Activated naive CD4-positive, alpha-beta T cell treated with anti-CD3 and anti-CD28 coated beads for 36 hours (primary cell): ENCODE measurements at regions of chr5 and their contacts with region 1.

Region 1: DNA sequence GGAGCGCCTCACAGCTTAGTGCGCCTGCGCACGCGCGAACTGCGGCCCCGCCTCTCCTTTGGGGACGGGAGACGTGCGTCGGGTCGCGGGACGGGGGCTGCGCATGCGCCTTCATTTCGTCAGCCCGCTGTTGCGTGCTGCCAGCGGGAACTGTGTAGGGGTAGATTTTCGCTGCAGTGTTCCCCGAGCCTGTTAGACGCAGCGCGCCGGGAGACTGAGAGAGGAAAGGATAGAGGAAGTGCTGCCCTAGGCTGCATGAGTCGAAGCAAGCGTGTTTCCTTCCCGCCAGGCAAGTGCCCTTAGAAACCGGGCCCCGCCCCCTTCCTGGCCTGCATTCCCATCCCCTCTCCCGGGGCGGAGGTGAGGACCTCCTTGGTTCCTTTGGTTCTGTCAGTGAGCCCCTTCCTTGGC is 12.3 kb downstream of the ITGA1 start:
- DNase-seq: peak; percentile 95
- H3K4me3 Mint-ChIP-seq: peak overlapping the region; percentile 93
- H3K27ac Mint-ChIP-seq: peak overlapping the region; percentile 93
- H3K4me1 Mint-ChIP-seq: peaks cover 46% of the 10 kb centered on the region
- H3K27me3 Mint-ChIP-seq: no peaks in the 10 kb centered on the region

Region 2: DNA sequence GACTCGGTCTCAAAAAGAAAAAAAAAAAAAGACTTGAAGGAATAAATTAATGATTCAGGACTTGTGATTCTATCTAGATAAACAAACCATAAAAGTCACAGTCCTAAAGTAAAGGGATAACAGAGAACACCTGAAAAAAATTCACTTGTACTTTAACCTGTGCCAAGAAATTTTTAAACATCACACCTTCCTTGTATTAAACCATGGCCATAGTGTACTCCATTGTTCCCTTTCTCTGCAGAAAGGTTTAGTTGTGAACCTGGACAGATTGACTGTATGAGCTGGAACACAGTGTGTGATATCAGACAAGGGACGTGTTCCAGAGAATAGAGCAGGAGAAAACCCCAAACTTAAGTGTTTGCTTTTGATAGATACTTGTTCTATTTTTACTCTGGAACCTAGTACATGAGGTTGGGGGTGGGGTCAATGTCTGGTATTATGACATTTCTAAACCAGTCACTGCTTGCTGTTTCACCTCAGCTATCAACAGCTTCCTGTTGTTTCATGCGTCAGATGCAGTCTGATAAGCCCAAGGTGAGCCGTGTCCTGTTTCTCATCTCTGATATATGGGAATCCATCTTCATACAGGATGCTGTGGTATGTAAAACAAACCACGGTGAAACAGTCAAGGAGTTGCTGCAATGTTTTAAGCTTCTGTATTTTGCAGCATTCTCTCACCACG is 74.8 kb before region 1 on chr5:
- CTCF ChIA-PET with region 1: interaction called, 4 read pairs
- intact Hi-C with region 1: loop called (anchors 1 kb)
- DNase-seq: peak; percentile 78
- H3K4me3 Mint-ChIP-seq: no peak overlapping the region
- H3K27ac Mint-ChIP-seq: peak overlapping the region; percentile 27
- H3K4me1 Mint-ChIP-seq: peaks cover 37% of the 10 kb centered on the region
- H3K27me3 Mint-ChIP-seq: no peaks in the 10 kb centered on the region

Region 3: GRCh38 chr5:52771343-52772039 is 28.5 kb before region 1 on chr5:
- CTCF ChIA-PET with region 1: no interaction called
- intact Hi-C with region 1: loop called (anchors 1 kb)
- DNase-seq: peak; percentile 63
- H3K4me3 Mint-ChIP-seq: no peak overlapping the region
- H3K27ac Mint-ChIP-seq: no peak overlapping the region
- H3K4me1 Mint-ChIP-seq: peaks cover 46% of the 10 kb centered on the region
- H3K27me3 Mint-ChIP-seq: no peaks in the 10 kb centered on the region

Region 4: GRCh38 chr5:52903142-52903541 is 103.2 kb after region 1 on chr5:
- CTCF ChIA-PET with region 1: no interaction called
- intact Hi-C with region 1: no loop called
- DNase-seq: no peak
- H3K4me3 Mint-ChIP-seq: no peak overlapping the region
- H3K27ac Mint-ChIP-seq: no peak overlapping the region
- H3K4me1 Mint-ChIP-seq: no peaks in the 10 kb centered on the region
- H3K27me3 Mint-ChIP-seq: peaks cover 2% of the 10 kb centered on the region

Region 5: GRCh38 chr5:52915176-52915875 is 115.3 kb after region 1 on chr5:
- CTCF ChIA-PET with region 1: interaction called, 13 read pairs
- intact Hi-C with region 1: loop called (anchors 1 kb)
- DNase-seq: peak; percentile 64
- H3K4me3 Mint-ChIP-seq: peak overlapping the region; percentile 27
- H3K27ac Mint-ChIP-seq: no peak overlapping the region
- H3K4me1 Mint-ChIP-seq: peaks cover 9% of the 10 kb centered on the region
- H3K27me3 Mint-ChIP-seq: no peaks in the 10 kb centered on the region

Region 6: GRCh38 chr5:53035868-53036381 is 235.9 kb after region 1 on chr5:
- CTCF ChIA-PET with region 1: interaction called, 3 read pairs
- intact Hi-C with region 1: loop called (anchors 1 kb)
- DNase-seq: no peak
- H3K4me3 Mint-ChIP-seq: no peak overlapping the region
- H3K27ac Mint-ChIP-seq: no peak overlapping the region
- H3K4me1 Mint-ChIP-seq: peaks cover 39% of the 10 kb centered on the region
- H3K27me3 Mint-ChIP-seq: no peaks in the 10 kb centered on the region